HCT116 (cell line): ENCODE measurements at regions of chr16 and their contacts with region 1.

Region 1: DNA sequence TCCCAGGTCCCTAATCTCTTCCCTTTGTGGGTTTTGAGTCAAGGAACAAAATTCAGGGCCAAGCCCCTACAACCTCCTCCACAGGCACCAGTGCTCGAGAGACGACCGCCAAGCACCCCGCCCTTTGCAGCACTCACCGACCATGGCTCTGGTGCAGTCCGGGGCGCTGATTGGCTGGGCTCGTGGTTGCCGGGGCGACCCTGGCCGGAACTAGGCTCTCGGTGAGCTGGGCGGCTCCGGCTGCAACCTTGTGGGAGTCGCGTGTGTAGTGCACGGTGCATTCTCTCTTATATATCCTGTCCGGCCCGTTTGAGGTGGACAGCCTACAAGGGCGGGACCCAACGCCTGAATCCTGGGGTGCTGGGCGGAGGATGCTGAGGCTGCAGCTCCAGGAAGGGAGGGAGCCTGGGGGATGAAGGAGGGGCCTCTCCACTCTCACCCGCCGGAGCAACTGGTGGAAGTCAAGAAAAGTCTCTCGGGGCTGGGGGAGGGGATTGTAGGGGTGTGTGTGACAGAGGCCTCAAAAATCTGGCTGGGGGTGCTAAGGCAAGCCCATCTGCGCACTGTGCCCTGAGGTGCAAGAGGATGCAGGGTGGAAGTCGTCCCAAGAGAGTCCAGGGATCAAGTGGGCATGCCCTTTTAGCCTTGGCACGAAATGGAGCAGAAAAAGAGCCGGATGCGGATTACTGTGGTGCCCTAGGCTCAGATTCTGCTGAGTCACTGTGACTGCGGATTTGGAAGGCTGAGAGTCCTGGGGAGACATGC is at the start of gene NQO1:
- DNase-seq: peak; percentile 92
- ATAC-seq: peak; percentile 89
- H3K4me3 ChIP-seq: peak within 1 kb of the TSS; percentile 94 to 96
- H3K27ac ChIP-seq: peak within 1 kb of the TSS; percentile 89
- H3K4me1 ChIP-seq: peaks cover 34 to 66% of the 10 kb centered on the region in 2 experiments
- H3K27me3 ChIP-seq: no peaks in the 10 kb centered on the region
- CTCF ChIP-seq: no peak
- POLR2A ChIP-seq: peak; percentile 86
- RAD21 ChIP-seq: no peak
- total RNA-seq, gene NQO1: 519 TPM

Region 2: GRCh38 chr16:69754469-69755310 is 28.2 kb after region 1 on chr16 and contains the start of gene NOB1:
- CTCF ChIA-PET with region 1: interaction called, 22 read pairs
- POLR2A ChIA-PET with region 1: interaction called, 13 read pairs
- RAD21 ChIA-PET with region 1: no interaction called
- intact Hi-C with region 1: loop called (anchors 2 kb)
- DNase-seq: peak; percentile 93
- ATAC-seq: peak; percentile 96
- H3K4me3 ChIP-seq: peak within 1 kb of the TSS; percentile 91 to 92
- H3K27ac ChIP-seq: peak within 1 kb of the TSS; percentile 76
- H3K4me1 ChIP-seq: peaks cover 7 to 14% of the 10 kb centered on the region in 2 experiments
- H3K27me3 ChIP-seq: no peaks in the 10 kb centered on the region
- CTCF ChIP-seq: peak; percentile 88 to 97 (median 94)
- POLR2A ChIP-seq: peak; percentile 76
- RAD21 ChIP-seq: peak; percentile 98
- total RNA-seq, gene NOB1: 172 TPM